ENCODE measurements at regions of chr3 and their contacts with region 1.

Region 1: GRCh38 chr3:132174500-132174899 is 139.7 kb upstream of the CPNE4 start:
- DNase-seq: no peak
- ATAC-seq: no peak
- H3K4me3 ChIP-seq: no peak overlapping the region
- H3K27ac ChIP-seq: no peak overlapping the region
- H3K4me1 ChIP-seq: no peaks in the 10 kb centered on the region
- H3K27me3 ChIP-seq: peaks cover 0 to 9% (median 4%) of the 10 kb centered on the region in 7 donors
- CTCF ChIP-seq: no peak

Region 2: DNA sequence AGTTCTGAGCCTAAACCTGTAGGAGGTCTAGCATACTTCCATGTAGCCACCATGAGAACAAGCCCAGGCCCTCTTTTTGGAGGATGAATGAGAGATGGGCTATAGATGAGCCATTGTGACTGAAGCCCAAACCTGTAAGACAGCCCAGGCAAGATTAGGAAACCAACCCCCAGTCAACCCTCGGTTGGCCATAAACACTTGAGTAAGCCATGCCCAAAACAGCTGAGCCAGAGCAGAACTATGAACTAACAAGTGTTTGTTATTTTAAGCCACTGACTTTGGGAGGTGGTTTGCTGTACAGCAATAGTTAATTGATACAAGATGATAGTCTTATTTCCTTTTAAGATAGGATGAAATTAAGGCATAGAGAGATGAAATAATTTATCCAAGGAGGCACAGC is 127.3 kb before region 1 on chr3:
- intact Hi-C with region 1: loop called in 2 of 10 experiments (anchors 5 to 10 kb)
- DNase-seq: no peak
- ATAC-seq: no peak
- H3K4me3 ChIP-seq: no peak overlapping the region
- H3K27ac ChIP-seq: no peak overlapping the region
- H3K4me1 ChIP-seq: no peaks in the 10 kb centered on the region
- H3K27me3 ChIP-seq: no peaks in the 10 kb centered on the region
- CTCF ChIP-seq: no peak

Measured in heart right ventricle (tissue), 16 donors.